ENCODE measurements at regions of chr3 and their contacts with region 1.

Region 1: DNA sequence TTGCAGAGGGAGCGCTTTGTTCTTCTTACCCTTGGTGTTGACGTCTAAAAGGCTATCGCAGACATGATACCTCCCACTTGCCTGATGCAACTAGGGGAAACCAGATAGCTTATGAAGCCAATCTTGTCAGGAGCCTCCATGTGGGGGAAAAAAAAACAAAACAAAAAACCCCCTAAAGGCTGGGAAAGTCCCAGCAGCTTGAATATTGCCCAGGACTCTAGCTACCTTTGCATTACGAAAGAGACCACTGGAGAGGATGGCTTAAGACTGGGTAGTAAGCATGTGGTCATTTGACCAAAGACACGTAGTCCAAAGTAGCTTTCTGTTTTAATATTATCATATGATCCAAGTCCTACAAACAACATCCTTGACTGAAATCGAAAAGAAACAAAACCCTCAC is 120.7 kb upstream of the WNT5A start:
- DNase-seq: peak; percentile 91
- ATAC-seq: peak; percentile 94
- H3K4me3 ChIP-seq: no peak overlapping the region
- H3K27ac ChIP-seq: no peak overlapping the region
- H3K4me1 ChIP-seq: peaks cover 26% of the 10 kb centered on the region
- H3K27me3 ChIP-seq: no peaks in the 10 kb centered on the region
- CTCF ChIP-seq: no peak
- EP300 ChIP-seq: peak in 1 of 2 experiments; percentile 80; a peak in 3 of 4 replicates
- POLR2A ChIP-seq: no peak
- RAD21 ChIP-seq: no peak

Region 2: DNA sequence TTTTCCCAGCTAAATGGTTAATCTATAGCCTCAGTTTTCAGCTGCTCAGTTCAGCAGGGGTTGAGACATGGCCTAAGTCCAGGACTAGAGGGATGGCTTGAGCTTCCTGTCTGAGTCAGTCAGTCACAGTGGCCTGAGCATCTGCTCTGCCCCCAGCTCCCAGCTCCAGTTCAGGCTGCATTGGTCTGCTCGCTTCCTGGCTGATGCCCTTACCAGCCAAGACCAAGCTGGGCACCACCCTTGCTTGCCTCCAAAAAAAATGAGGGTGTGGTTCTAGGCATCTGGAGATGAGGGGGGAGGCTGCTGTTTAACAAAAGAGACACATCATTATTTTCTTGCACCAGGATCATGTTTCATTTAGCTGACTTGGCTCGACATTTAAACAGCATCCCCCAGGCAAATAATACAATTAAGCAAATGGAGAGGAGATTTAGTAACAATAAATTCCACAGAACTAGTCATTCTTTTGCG is 191.5 kb before region 1 on chr3:
- CTCF ChIA-PET with region 1: no interaction called
- POLR2A ChIA-PET with region 1: no interaction called
- RAD21 ChIA-PET with region 1: no interaction called
- SMC1A ChIA-PET with region 1: no interaction called
- in situ Hi-C with region 1: no loop called
- intact Hi-C with region 1: no loop called
- DNase-seq: no peak
- ATAC-seq: no peak
- H3K4me3 ChIP-seq: no peak overlapping the region
- H3K27ac ChIP-seq: no peak overlapping the region
- H3K4me1 ChIP-seq: no peaks in the 10 kb centered on the region
- H3K27me3 ChIP-seq: no peaks in the 10 kb centered on the region; a peak in 1 of 4 replicates
- CTCF ChIP-seq: no peak
- EP300 ChIP-seq: no peak
- POLR2A ChIP-seq: no peak
- RAD21 ChIP-seq: no peak

Region 3: GRCh38 chr3:55511895-55512570 is 95.8 kb before region 1 on chr3:
- CTCF ChIA-PET with region 1: no interaction called
- POLR2A ChIA-PET with region 1: interaction called, 3 read pairs
- RAD21 ChIA-PET with region 1: interaction called, 3 read pairs
- SMC1A ChIA-PET with region 1: interaction called, 4 read pairs
- in situ Hi-C with region 1: no loop called
- intact Hi-C with region 1: loop called (anchors 5 kb)
- DNase-seq: no peak
- ATAC-seq: peak; percentile 49
- H3K4me3 ChIP-seq: no peak overlapping the region
- H3K27ac ChIP-seq: no peak overlapping the region
- H3K4me1 ChIP-seq: no peaks in the 10 kb centered on the region
- H3K27me3 ChIP-seq: peaks cover 0 to 2% of the 10 kb centered on the region in 2 experiments; a peak in 1 of 4 replicates
- CTCF ChIP-seq: no peak
- EP300 ChIP-seq: no peak
- POLR2A ChIP-seq: no peak
- RAD21 ChIP-seq: no peak

Region 4: DNA sequence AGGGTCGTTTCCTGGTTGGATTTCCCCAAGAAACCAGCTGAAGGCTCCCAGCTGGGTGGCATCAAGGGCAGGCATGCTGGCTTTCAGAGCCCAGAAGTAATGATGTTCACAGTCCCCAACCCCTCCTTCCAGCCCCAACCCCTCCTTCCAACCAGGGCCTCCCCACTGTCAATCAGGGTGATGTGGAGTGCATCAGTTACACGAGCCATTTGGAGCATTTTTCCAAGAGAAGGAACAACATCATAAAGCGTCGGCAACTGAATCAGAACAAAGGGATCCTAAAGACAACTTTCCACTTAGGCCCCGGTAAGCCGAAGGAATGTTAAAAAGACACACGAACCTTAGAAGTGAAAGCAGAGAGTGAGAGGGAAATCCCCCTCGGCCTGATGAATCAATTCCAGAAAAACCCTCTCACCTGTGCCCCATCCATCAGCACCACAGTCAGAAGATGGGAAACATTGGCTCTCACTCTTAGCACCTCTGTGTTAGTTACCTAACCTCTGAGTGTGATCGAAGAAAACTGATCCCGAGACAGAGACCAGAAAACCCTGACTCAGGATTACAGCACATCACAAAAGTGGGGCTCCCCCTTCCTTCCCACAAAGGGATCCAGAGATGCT is 19.6 kb before region 1 on chr3:
- CTCF ChIA-PET with region 1: no interaction called
- POLR2A ChIA-PET with region 1: interaction called, 3 read pairs
- RAD21 ChIA-PET with region 1: interaction called, 12 read pairs
- SMC1A ChIA-PET with region 1: interaction called, 8 read pairs
- in situ Hi-C with region 1: no loop called
- intact Hi-C with region 1: no loop called
- DNase-seq: no peak
- ATAC-seq: peak; percentile 89
- H3K4me3 ChIP-seq: no peak overlapping the region
- H3K27ac ChIP-seq: no peak overlapping the region
- H3K4me1 ChIP-seq: peaks cover 6% of the 10 kb centered on the region
- H3K27me3 ChIP-seq: no peaks in the 10 kb centered on the region
- CTCF ChIP-seq: no peak
- EP300 ChIP-seq: no peak; a peak in 1 of 4 replicates
- POLR2A ChIP-seq: no peak
- RAD21 ChIP-seq: no peak

Region 5: GRCh38 chr3:55620351-55621025 is 12.6 kb after region 1 on chr3:
- CTCF ChIA-PET with region 1: interaction called, 14 read pairs
- POLR2A ChIA-PET with region 1: interaction called, 4 read pairs
- RAD21 ChIA-PET with region 1: interaction called, 11 read pairs
- SMC1A ChIA-PET with region 1: interaction called, 37 read pairs
- in situ Hi-C with region 1: no loop called
- intact Hi-C with region 1: no loop called
- DNase-seq: peak; percentile 59
- ATAC-seq: peak; percentile 84
- H3K4me3 ChIP-seq: peak overlapping the region; percentile 18; the same call in 1 of the 2 replicates
- H3K27ac ChIP-seq: peak overlapping the region; percentile 75
- H3K4me1 ChIP-seq: peaks cover 47% of the 10 kb centered on the region
- H3K27me3 ChIP-seq: no peaks in the 10 kb centered on the region
- CTCF ChIP-seq: no peak
- EP300 ChIP-seq: no peak
- POLR2A ChIP-seq: no peak
- RAD21 ChIP-seq: no peak

Region 6: GRCh38 chr3:55647670-55648069 is 39.8 kb after region 1 on chr3:
- CTCF ChIA-PET with region 1: no interaction called
- POLR2A ChIA-PET with region 1: no interaction called
- RAD21 ChIA-PET with region 1: no interaction called
- SMC1A ChIA-PET with region 1: no interaction called
- in situ Hi-C with region 1: no loop called
- intact Hi-C with region 1: no loop called
- DNase-seq: no peak
- ATAC-seq: no peak
- H3K4me3 ChIP-seq: no peak overlapping the region
- H3K27ac ChIP-seq: no peak overlapping the region
- H3K4me1 ChIP-seq: peaks cover 3% of the 10 kb centered on the region; the same call in 1 of the 2 replicates
- H3K27me3 ChIP-seq: no peaks in the 10 kb centered on the region; a peak in 1 of 4 replicates
- CTCF ChIP-seq: no peak
- EP300 ChIP-seq: no peak
- POLR2A ChIP-seq: no peak
- RAD21 ChIP-seq: no peak

Region 7: DNA sequence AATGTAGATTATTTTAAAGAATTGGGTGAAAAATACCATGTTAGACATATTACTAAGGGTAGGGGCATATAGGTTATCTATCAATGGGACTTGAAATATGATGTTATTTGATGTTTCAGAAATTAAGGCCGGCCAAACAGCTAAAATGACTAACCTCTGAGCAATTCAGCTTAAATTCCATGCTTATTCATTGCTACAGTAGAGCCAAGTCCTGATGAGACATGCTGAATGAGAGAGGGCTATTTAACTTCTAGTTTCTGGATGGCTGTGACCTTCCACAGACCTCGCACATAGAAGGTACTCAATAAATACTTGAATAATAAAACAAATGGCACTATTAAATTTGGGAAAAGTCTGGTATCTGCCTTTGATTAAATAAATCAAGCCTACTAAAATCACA is 54.8 kb after region 1 on chr3:
- CTCF ChIA-PET with region 1: interaction called, 3 read pairs
- POLR2A ChIA-PET with region 1: interaction called, 7 read pairs
- RAD21 ChIA-PET with region 1: interaction called, 11 read pairs
- SMC1A ChIA-PET with region 1: interaction called, 10 read pairs
- in situ Hi-C with region 1: no loop called
- intact Hi-C with region 1: no loop called
- DNase-seq: no peak
- ATAC-seq: no peak
- H3K4me3 ChIP-seq: no peak overlapping the region
- H3K27ac ChIP-seq: no peak overlapping the region
- H3K4me1 ChIP-seq: peaks cover 35% of the 10 kb centered on the region
- H3K27me3 ChIP-seq: no peaks in the 10 kb centered on the region
- CTCF ChIP-seq: no peak
- EP300 ChIP-seq: no peak
- POLR2A ChIP-seq: no peak
- RAD21 ChIP-seq: no peak

Region 8: DNA sequence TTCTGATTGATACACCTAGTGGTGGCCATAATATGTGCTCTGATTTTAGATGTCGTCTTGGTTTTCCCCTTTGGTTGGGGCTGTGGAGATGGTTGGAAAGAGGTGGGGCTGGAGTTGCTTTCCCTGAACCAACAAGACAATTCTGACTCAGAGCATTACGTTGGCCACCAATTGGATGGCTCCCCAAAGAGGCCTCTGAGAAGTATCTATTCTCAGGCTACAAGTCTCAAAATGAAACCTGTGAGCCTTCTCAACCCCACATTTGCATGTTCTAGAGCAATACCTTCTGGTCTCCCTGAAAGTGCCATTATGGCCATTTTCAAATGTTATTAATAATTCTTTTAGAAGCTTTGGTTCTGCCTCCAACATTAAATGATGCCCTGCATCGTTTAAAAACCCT is 67.6 kb after region 1 on chr3:
- CTCF ChIA-PET with region 1: interaction called, 3 read pairs
- POLR2A ChIA-PET with region 1: interaction called, 3 read pairs
- RAD21 ChIA-PET with region 1: interaction called, 4 read pairs
- SMC1A ChIA-PET with region 1: interaction called, 12 read pairs
- in situ Hi-C with region 1: no loop called
- intact Hi-C with region 1: loop called (anchors 5 kb)
- DNase-seq: peak; percentile 93
- ATAC-seq: peak; percentile 99
- H3K4me3 ChIP-seq: peak overlapping the region; percentile 17; the same call in 1 of the 2 replicates
- H3K27ac ChIP-seq: peak overlapping the region; percentile 55
- H3K4me1 ChIP-seq: peaks cover 41% of the 10 kb centered on the region
- H3K27me3 ChIP-seq: no peaks in the 10 kb centered on the region
- CTCF ChIP-seq: peak; percentile 6 to 33 (median 21); a peak in 1 of 6 replicates
- EP300 ChIP-seq: peak; percentile 67 to 83; a peak in 3 of 4 replicates
- POLR2A ChIP-seq: no peak
- RAD21 ChIP-seq: peak; percentile 28; the same call in 1 of the 2 replicates